ENCODE measurements at regions of chr3 and their contacts with region 1.

Region 1: DNA sequence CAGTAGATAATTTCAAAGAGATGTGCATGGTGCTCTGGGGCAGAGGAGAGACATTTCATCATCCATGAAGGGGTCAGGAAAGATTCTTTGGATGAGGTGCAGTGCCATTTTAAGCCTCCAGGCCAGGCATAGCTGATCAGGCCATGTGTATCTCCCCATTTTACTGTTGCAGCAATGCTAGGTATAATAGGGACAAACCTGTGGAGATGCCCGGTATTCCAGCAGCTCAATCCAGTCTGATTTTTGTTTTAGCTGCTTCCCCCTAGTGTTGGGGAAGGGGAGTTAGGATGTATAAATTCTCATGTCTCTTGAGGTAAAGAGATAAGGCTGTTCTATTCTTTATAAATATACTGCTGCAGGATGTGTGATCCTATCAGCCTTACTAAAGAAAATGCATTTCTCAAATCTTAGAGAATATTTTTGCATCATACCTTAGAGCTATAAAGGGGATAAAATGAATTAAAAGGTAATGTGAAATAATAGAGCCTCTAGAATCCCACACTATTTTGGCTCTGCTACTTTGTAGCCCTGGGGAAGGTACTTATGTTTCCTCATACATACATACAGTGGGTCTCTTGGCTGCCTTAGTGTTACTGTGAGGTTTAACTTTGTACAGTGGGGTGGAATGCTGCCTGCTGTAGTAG is 5.2 kb downstream of the CDV3 start:
- DNase-seq: no peak
- H3K4me3 ChIP-seq: peak overlapping the region in 6 of 8 donors; percentile 8 to 90 (median 73)
- H3K27ac ChIP-seq: peak overlapping the region in 4 of 8 donors; percentile 3 to 95 (median 34)
- H3K4me1 ChIP-seq: peaks cover 53 to 91% (median 83%) of the 10 kb centered on the region in 6 donors
- H3K27me3 ChIP-seq: no peaks in the 10 kb centered on the region
- CTCF ChIP-seq: peak in 10 of 11 experiments; percentile 10 to 60 (median 46)
- POLR2A ChIP-seq: no peak

Region 2: DNA sequence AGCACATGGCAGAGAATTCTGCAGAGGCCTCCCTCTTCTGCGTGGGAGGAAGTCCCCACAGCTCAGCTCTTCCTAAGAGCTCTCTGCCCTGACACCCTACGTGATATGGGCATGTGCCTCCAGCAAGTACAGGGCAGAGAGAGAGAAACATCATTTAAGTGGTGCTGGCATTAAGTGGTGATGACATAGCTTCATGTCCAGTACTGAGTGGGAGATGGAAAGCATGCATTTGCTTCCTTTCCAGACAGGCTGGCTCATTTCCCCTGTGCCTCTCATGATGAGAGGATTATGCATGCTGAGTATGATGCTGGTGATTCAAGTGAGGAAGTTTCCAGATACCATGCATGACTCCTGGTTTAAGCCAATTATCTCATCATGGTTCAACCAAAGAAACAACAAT is 151.9 kb before region 1 on chr3:
- intact Hi-C with region 1: no loop called
- DNase-seq: no peak
- H3K4me3 ChIP-seq: no peak overlapping the region
- H3K27ac ChIP-seq: no peak overlapping the region
- H3K4me1 ChIP-seq: peaks cover 0 to 8% (median 5%) of the 10 kb centered on the region in 6 donors
- H3K27me3 ChIP-seq: peaks cover 0 to 19% (median 0%) of the 10 kb centered on the region in 7 donors
- CTCF ChIP-seq: no peak
- POLR2A ChIP-seq: no peak

Region 3: GRCh38 chr3:133487920-133488540 is 90.6 kb before region 1 on chr3:
- intact Hi-C with region 1: loop called (anchors 5 kb)
- DNase-seq: no peak
- H3K4me3 ChIP-seq: no peak overlapping the region
- H3K27ac ChIP-seq: peak overlapping the region in 1 of 8 donors; percentile 24
- H3K4me1 ChIP-seq: peaks cover 0 to 53% (median 28%) of the 10 kb centered on the region in 6 donors
- H3K27me3 ChIP-seq: no peaks in the 10 kb centered on the region
- CTCF ChIP-seq: peak; percentile 13 to 74 (median 52)
- POLR2A ChIP-seq: no peak

Measured in spleen (tissue), 13 donors.